ENCODE measurements at regions of chr1 and their contacts with region 1.

Region 1: GRCh38 chr1:20151906-20152598 is 12.9 kb downstream of the PLA2G2F start:
- DNase-seq: peak; percentile 81
- ATAC-seq: peak; percentile 98
- H3K4me3 Mint-ChIP-seq: peak overlapping the region; percentile 62
- H3K27ac Mint-ChIP-seq: no peak overlapping the region
- H3K4me1 Mint-ChIP-seq: peaks cover 10% of the 10 kb centered on the region
- H3K27me3 Mint-ChIP-seq: peaks cover 1% of the 10 kb centered on the region
- CTCF ChIP-seq: peak; percentile 97

Region 2: GRCh38 chr1:19918057-19918456 is 234.0 kb before region 1 on chr1:
- CTCF ChIA-PET with region 1: interaction called, 86 read pairs
- POLR2A ChIA-PET with region 1: no interaction called
- intact Hi-C with region 1: loop called (anchors 5 kb)
- DNase-seq: peak; percentile 92
- ATAC-seq: peak; percentile 76
- H3K4me3 Mint-ChIP-seq: no peak overlapping the region
- H3K27ac Mint-ChIP-seq: no peak overlapping the region
- H3K4me1 Mint-ChIP-seq: peaks cover 4% of the 10 kb centered on the region
- H3K27me3 Mint-ChIP-seq: no peaks in the 10 kb centered on the region
- CTCF ChIP-seq: peak; percentile 78

Region 3: DNA sequence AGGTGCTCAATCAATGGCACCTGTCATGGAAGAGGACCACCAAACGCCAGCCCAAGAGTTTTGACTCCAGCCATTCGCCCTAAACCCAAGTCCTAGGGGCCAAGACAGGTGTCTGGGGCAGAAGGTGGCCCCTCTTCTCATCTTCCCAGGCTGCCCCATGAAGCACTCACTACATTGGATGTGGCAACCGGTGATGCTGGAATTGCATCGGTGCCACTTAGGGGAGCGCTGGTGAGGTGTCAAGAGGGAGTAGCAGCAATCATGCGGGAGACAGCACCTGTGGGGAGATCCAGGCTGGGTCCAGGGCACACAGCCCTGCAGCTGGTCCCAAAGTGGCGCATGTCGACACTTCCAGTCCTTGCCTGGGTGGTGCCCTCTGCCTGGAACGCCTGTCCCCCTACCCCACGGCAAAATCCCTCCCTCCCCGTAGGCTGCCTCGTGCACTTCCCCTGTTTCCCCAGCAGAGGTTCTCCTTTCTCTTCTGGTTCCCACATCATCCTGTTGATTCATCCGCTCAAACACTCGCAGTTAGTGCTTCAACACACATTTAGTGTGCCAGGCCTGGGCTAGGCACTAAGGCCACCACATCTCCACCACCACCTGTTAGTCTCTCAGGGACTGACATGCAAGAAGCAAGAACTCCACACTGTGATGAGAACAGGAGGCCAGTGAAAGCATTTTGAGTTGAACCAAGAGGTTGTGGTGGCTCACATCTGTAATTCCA is 51.3 kb before region 1 on chr1:
- CTCF ChIA-PET with region 1: interaction called, 9 read pairs
- POLR2A ChIA-PET with region 1: no interaction called
- intact Hi-C with region 1: loop called (anchors 5 kb)
- DNase-seq: peak; percentile 39
- ATAC-seq: peak; percentile 84
- H3K4me3 Mint-ChIP-seq: no peak overlapping the region
- H3K27ac Mint-ChIP-seq: no peak overlapping the region
- H3K4me1 Mint-ChIP-seq: no peaks in the 10 kb centered on the region
- H3K27me3 Mint-ChIP-seq: peaks cover 7% of the 10 kb centered on the region
- CTCF ChIP-seq: peak; percentile 64

Region 4: DNA sequence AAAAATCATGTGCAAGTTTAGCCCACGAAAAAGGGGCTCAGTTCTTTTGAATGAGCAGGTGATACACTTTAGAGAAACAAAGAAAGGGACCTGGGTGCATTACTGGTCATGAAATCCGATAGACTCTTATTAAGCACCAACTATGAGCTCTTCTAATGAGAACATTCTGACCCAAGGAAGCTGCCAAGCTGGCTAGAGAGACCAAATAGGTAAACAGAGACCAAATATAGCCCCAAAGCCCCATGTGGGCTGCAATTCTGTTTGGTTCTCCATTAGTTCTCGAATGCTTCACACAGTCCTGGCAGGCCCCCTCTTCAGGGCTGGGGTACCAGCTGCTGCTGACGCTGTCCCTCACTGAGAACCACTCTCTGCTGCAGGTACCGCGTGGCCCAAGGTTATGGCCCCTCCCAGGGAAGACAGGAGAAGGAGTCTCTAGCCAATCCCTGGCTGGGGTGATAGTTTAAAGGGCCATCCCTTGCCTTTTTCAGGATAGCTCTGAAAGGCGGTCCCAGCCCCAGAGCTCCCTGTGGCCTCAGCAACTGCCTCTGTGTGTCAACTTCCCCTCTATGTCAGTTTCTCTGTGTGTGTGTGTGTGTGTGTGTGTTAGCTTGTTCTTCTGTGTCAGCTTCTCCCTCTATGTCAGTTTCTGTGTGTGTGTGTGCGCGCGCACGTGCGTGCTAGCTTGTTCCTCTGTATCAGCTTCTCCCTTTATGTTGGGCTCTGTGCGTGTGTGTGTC is 26.8 kb after region 1 on chr1:
- CTCF ChIA-PET with region 1: interaction called, 11 read pairs
- POLR2A ChIA-PET with region 1: no interaction called
- intact Hi-C with region 1: no loop called
- DNase-seq: no peak
- ATAC-seq: no peak
- H3K4me3 Mint-ChIP-seq: no peak overlapping the region
- H3K27ac Mint-ChIP-seq: no peak overlapping the region
- H3K4me1 Mint-ChIP-seq: peaks cover 17% of the 10 kb centered on the region
- H3K27me3 Mint-ChIP-seq: peaks cover 2% of the 10 kb centered on the region
- CTCF ChIP-seq: no peak

Region 5: GRCh38 chr1:20242810-20243479 is 90.9 kb after region 1 on chr1:
- CTCF ChIA-PET with region 1: no interaction called
- POLR2A ChIA-PET with region 1: no interaction called
- intact Hi-C with region 1: no loop called
- DNase-seq: no peak
- ATAC-seq: no peak
- H3K4me3 Mint-ChIP-seq: no peak overlapping the region
- H3K27ac Mint-ChIP-seq: no peak overlapping the region
- H3K4me1 Mint-ChIP-seq: peaks cover under 1% of the 10 kb centered on the region
- H3K27me3 Mint-ChIP-seq: peaks cover 29% of the 10 kb centered on the region
- CTCF ChIP-seq: no peak